ENCODE measurements at regions of chr12 and their contacts with region 1.

Region 1: DNA sequence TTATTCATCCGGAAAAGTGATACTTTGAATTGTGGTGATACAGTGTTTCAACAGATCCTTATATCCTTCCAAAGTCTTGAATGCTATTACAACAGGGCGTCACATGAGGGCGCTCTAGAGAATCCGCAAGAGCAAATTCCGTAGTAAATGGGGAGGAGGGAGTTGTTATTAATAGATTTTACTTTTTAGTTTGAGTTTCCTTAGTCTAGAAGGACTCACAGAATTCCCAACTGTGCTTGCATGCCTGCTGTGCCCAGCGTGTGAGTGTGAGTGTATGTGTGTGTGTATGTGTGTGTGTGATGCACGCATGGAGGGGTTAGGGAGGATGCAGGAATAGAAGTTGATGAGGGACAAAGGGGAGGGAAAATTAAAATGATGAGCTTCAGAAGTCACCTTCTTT is 375.3 kb downstream of the C12orf75 start:
- DNase-seq: peak; percentile 25 to 60 (median 31)
- ATAC-seq: peak; percentile 48; the same call in 2 of the 3 replicates
- H3K4me3 ChIP-seq: no peak overlapping the region
- H3K27ac ChIP-seq: no peak overlapping the region
- H3K4me1 ChIP-seq: no peaks in the 10 kb centered on the region
- H3K27me3 ChIP-seq: no peaks in the 10 kb centered on the region; a peak in 1 of 5 replicates
- CTCF ChIP-seq: peak; percentile 48 to 75 (median 74); a peak in 5 of 6 replicates
- EP300 ChIP-seq: no peak
- POLR2A ChIP-seq: no peak
- RAD21 ChIP-seq: peak; percentile 46 to 69; a peak in 3 of 4 replicates

Region 2: GRCh38 chr12:105613887-105614286 is 91.9 kb before region 1 on chr12:
- CTCF ChIA-PET with region 1: no interaction called
- POLR2A ChIA-PET with region 1: no interaction called
- in situ Hi-C with region 1: no loop called
- intact Hi-C with region 1: no loop called
- DNase-seq: no peak
- ATAC-seq: no peak
- H3K4me3 ChIP-seq: no peak overlapping the region
- H3K27ac ChIP-seq: no peak overlapping the region
- H3K4me1 ChIP-seq: no peaks in the 10 kb centered on the region
- H3K27me3 ChIP-seq: no peaks in the 10 kb centered on the region
- CTCF ChIP-seq: no peak
- EP300 ChIP-seq: no peak
- POLR2A ChIP-seq: no peak
- RAD21 ChIP-seq: no peak

Region 3: DNA sequence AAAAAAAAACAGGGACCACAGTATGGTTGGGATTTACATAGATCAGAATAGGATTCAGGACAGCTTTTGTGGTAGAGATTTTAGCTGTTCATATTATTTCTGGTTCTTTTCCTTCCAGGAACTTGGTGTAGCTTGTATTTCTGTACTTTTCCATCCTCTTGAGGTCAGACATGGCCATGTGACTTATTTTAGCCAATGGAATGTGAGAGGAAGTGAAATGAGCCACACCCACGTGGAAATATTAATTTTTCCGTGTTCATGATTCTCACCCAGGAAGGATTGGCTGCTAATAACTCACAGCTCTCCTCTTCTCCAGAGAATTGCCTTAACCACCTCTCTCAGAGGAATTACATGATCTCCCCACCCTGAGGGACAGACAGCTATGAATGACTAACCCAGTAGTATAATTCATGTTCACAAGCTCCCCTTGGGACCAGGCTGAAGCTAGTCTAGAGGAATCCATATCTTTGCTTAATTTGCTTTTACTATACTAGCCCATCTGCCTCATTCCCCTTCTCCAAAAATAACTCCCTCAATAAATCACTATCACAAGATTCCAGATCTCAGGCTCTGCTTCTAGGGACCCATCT is 92.6 kb after region 1 on chr12:
- CTCF ChIA-PET with region 1: no interaction called
- POLR2A ChIA-PET with region 1: no interaction called
- in situ Hi-C with region 1: loop called (anchors 5 kb)
- intact Hi-C with region 1: no loop called
- DNase-seq: peak in 3 of 4 experiments; percentile 21 to 43 (median 43)
- ATAC-seq: no peak
- H3K4me3 ChIP-seq: no peak overlapping the region
- H3K27ac ChIP-seq: no peak overlapping the region
- H3K4me1 ChIP-seq: no peaks in the 10 kb centered on the region
- H3K27me3 ChIP-seq: no peaks in the 10 kb centered on the region
- CTCF ChIP-seq: no peak
- EP300 ChIP-seq: no peak
- POLR2A ChIP-seq: no peak
- RAD21 ChIP-seq: no peak

Region 4: GRCh38 chr12:105922670-105923102 is 216.9 kb after region 1 on chr12:
- CTCF ChIA-PET with region 1: no interaction called
- POLR2A ChIA-PET with region 1: no interaction called
- in situ Hi-C with region 1: no loop called
- intact Hi-C with region 1: no loop called
- DNase-seq: no peak
- ATAC-seq: no peak
- H3K4me3 ChIP-seq: no peak overlapping the region
- H3K27ac ChIP-seq: no peak overlapping the region
- H3K4me1 ChIP-seq: no peaks in the 10 kb centered on the region
- H3K27me3 ChIP-seq: no peaks in the 10 kb centered on the region
- CTCF ChIP-seq: no peak
- EP300 ChIP-seq: no peak
- POLR2A ChIP-seq: no peak
- RAD21 ChIP-seq: no peak

Region 5: DNA sequence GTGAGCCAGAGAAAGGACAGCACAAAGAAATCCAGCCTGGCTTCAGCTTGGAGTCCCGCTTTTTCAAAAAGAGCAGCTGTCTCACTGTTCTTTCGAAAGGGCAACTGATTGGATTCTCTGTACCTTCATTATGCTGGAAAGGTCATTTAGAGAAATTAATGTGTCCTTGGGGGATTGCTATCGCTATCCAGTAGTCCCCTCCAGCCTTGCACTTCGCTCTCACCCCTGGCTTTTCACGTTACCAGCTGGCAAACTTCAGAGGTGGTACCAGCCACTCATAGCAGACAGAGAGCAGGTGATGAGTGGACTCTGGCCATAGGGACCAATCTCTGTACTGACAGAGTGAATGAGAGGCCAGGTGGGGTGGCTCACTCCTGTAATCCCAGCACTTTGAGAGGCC is 444.8 kb after region 1 on chr12:
- CTCF ChIA-PET with region 1: no interaction called
- POLR2A ChIA-PET with region 1: no interaction called
- in situ Hi-C with region 1: loop called (anchors 10 kb)
- intact Hi-C with region 1: no loop called
- DNase-seq: no peak
- ATAC-seq: no peak
- H3K4me3 ChIP-seq: no peak overlapping the region
- H3K27ac ChIP-seq: no peak overlapping the region
- H3K4me1 ChIP-seq: no peaks in the 10 kb centered on the region
- H3K27me3 ChIP-seq: peaks cover 0 to 8% of the 10 kb centered on the region in 2 experiments; a peak in 1 of 5 replicates
- CTCF ChIP-seq: no peak
- EP300 ChIP-seq: no peak
- POLR2A ChIP-seq: no peak
- RAD21 ChIP-seq: no peak